Cardiac septum (tissue), 1 donor: ENCODE measurements at regions of chr6 and their contacts with region 1.

Region 1: DNA sequence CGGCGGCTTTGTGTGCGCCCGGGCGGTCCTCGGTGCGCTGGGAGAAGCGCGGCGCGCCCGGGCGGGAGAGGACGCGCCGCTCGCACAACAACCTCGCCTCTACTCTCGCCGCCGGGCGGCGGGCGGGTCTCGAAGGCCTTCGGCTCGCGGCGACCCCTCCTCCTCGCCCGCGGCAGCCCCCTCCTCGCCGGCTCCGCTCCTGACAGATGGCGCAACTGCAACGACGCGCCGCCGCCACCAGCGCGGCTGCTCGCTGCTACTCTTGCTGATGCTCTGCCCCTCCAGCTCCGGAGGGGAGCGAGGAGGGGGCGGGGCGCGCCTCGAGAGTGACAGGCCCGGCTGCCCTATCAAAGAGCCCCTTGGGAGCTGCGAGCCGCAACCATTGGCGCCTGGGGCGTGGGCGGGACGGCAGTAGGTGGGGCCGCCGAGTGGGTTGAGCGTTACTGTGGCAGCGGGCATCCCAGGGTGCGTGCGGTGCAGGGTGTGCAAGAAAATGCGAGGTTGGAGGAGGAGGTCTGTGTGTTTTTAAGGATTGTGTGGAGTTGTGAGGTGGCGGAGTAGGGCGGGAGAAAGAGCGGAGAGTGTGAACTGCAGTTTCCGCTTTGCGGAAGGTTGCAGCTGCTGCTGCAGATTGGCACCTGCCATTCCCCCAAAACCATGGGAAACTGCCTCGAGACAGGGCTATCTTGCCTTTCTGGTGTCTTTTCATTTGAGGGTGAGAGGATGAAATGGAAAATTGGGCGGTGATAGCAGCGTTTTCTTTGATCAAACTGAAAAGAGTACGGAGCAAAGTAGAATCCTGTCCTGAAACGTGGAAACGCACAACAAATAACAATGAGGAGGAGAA is at the start of gene FYN:
- DNase-seq: peak; percentile 99
- total RNA-seq, gene FYN: 65.3 TPM

Region 2: GRCh38 chr6:111764238-111765175 is 108.9 kb before region 1 on chr6:
- intact Hi-C with region 1: loop called (anchors 5 kb)
- DNase-seq: no peak

Region 3: GRCh38 chr6:111824608-111825337 is 48.6 kb before region 1 on chr6:
- intact Hi-C with region 1: loop called (anchors 5 kb)
- DNase-seq: no peak

Region 4: GRCh38 chr6:111997078-111997852 is 123.9 kb after region 1 on chr6:
- intact Hi-C with region 1: loop called (anchors 5 kb)
- DNase-seq: peak; percentile 90

Region 5: DNA sequence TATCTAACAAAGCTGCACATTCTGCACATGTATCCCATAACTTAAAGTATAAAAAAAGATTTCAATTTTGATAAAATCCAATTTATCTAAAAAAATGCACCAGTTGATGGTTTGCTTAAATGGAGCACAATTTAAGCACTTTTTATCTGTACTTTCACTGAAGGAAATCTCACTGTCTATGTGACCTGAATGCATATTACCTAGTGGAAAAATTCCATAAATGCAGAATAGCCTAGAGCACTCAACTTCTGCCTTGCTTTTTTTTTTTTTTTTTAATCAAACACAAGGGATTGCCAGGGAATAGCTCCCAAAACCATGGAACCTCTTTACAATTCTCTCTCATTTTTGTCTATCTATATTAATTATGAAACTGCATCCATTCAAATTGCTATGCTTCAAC is 554.1 kb after region 1 on chr6:
- intact Hi-C with region 1: no loop called
- DNase-seq: no peak